ENCODE measurements at regions of chr14 and their contacts with region 1.

Region 1: DNA sequence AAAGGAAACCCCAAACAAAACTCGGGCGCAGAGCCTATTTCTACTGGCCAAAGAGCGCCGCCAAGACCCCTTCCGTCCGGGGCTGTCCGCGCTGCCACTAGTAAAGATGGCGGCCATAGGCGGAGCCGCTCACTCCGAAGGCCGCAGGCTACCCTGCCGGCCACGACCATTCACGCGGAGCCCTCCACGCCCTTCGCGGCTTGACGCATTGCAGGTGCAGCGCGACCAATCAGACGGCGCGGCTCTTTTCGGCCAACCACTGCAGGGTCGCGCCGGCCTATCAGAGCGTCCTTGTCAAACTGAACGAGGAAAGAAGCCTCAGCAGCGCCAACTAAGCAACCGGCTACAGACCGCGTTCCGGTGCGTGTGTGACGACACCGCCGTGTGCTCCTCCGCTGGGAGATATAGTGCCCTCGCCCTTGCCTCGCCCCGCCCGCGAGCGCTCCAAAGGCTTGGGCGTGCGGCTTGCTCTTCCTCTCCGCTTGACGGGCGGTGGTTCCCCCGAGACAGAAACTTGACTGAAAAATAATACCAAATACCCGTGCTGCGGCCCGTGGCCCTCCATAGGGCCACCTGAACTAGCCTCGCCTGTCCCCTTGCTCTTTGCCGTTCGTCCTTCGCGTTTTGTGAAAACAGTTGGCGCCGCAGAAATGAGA is 13.6 kb upstream of the CALM1 start:
- DNase-seq: peak; percentile 96
- H3K4me3 ChIP-seq: peak overlapping the region; percentile 51
- H3K27me3 ChIP-seq: no peaks in the 10 kb centered on the region
- CTCF ChIP-seq: 0 out of 2 replicates have a peak, but pooled peaks have one; percentile 28

Region 2: DNA sequence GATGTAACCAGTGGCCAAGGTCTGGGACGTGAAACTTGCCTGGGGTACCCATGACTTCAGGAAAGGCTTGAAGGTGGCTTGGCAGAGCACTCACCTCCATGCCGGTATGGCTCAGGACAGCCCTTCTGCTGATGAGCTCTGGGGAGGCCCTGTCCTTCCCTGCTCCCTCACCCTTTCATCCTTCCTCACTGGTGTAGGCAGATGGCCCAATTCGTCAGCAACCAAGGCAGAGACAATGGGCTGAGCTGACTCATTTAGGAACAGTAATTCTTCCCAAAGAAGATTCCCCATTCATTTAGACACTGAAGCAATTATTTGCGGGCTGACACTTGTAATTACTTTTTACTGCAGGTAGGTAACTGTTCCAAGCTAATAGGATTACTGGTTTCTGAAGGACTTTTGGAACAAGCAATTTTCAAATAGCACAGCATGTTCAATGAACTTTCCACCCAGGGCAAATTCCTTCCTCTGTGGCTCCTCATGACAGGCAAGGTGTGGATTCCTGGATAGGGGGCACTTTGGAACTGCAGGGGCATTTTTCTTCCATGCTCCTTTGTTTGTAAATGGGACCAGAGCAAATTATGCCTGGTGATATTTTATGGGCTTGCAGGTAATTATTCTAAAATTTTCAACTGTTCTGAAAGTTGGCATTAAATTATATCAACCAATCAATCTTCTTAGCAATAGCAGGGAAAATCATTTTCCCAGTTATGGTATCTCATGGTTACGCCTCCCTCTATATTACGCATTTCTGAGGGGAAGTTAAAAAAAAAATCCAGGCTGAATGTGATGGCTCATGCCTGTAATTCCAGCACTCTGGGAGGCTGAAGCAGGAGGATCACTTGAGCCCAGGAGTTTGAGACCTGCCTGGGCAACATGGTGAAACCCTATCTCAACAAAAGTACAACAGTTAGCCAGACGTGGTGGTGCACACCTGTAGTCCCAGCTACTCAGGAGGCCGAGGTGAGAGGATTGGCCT is 27.4 kb before region 1 on chr14:
- CTCF ChIA-PET with region 1: no interaction called
- POLR2A ChIA-PET with region 1: no interaction called
- DNase-seq: no peak
- H3K4me3 ChIP-seq: no peak overlapping the region
- H3K27me3 ChIP-seq: peaks cover 2% of the 10 kb centered on the region; the same call in 1 of the 2 replicates
- CTCF ChIP-seq: no peak

Region 3: DNA sequence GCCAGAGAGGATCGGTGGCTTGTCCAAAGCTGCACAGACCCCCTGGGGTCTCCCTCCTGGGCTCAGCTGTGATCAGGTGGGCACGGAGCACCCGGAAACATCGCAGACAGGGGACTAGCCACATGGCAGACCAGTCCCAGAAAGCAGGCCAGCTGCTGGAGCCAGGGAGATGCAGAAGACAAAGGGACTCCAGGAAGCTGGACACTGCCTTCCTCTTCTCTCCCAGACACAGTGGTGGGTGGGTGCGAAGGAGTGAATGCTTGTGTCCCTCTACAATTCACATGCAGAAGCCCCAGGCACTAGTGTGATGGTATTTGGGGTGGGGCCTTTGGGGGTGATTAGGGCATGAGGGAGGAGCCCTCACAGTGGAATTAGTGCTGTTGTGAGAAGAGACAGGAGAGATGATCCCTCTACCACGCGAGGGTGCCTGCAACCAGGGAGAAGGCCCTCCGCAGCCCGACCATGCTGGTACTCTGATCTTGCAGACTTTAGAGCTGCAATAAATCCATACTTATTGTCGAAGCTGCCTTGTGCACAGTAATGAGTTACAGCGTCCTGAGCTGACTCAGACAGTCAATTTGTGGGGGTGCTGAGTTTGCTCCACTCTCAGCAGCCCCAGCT is 108.8 kb after region 1 on chr14:
- CTCF ChIA-PET with region 1: no interaction called
- POLR2A ChIA-PET with region 1: interaction called, 12 read pairs
- DNase-seq: no peak
- H3K4me3 ChIP-seq: no peak overlapping the region
- H3K27me3 ChIP-seq: peaks cover 3% of the 10 kb centered on the region; the same call in 1 of the 2 replicates
- CTCF ChIP-seq: no peak

Measured in BJ (cell line).